Left cardiac atrium (tissue), 4 donors: ENCODE measurements at regions of chr2 and their contacts with region 1.

Region 1: GRCh38 chr2:165293440-165294353 is 54.5 kb downstream of the SCN2A start:
- DNase-seq: no peak
- ATAC-seq: peak; percentile 99

Region 2: GRCh38 chr2:164937864-164938401 is 355.8 kb before region 1 on chr2:
- intact Hi-C with region 1: no loop called
- DNase-seq: no peak
- ATAC-seq: no peak

Region 3: DNA sequence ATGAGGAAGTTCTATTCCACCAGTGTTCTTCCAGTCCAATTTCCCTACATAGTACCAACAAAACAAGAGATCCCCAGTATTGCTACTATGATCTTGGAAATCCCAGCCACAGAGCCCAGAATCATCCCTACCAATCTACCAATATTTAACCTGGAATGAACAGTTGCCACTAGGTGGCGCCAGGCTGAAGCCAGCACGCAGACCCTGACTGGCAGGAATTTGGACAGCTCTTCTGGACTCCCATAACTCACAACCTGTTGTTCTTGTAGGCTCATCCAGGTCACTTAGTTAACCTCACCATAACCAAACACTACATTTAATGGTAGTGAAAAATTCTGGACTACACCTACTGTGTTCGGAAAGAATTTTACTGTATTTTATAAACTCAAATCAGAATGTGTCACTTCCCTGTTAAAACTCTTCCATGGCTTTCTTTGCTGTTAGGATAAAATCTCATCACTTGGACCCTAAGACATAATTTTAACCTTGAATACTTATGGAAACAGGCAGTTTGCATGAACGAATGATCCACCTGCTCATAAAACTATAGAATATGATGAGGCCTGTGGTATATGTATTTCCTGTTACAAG is 278.6 kb before region 1 on chr2:
- intact Hi-C with region 1: loop called in 1 of 2 experiments (anchors 5 kb)
- DNase-seq: peak; percentile 64
- ATAC-seq: peak; percentile 75 to 81

Region 4: DNA sequence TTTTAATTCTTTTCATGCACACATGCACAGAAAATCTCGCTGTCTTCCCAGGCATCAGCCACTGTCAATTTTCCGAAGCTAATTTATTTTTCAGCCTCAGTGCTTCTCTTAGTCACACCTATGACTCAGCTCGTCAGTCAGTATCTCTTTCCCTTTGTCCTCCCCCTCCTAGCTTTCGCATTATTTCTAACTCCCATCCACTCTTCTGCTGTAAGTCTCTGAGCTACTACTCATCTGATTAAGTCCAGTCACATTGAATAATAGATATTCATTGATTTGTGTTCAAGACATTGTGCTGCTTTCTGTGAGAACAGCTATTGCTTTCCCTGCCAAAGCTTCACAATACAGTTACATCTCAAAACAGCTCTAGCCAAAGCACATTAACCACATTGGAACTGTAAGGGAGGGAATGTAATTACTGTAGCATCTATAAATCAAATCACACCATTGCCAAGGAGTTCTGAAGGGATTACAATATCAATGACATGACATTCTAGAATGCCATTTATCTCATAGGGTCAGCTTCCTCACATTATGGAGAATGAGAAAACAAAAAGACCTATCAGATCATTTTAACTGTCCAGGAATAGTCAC is 179.3 kb before region 1 on chr2:
- intact Hi-C with region 1: no loop called
- DNase-seq: no peak
- ATAC-seq: no peak

Region 5: DNA sequence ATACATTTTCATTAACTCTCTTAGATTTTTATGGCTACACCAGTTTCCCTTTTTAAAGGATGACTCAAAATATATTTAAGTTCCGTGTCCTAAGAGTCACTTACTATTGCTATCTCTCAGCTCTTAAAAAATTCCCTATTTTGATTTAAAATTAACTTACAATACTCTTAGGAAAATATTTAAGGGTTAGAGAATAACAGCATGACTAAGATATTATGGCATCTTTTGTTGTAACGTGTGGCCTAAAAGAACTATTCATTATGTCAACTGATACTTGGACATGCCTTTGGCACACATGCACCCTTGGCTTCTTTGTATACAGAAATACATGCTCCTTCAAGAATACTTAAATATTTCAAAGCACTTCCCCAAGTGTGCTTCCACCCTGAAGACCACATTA is 132.2 kb before region 1 on chr2:
- intact Hi-C with region 1: loop called in 1 of 2 experiments (anchors 5 kb)
- DNase-seq: no peak
- ATAC-seq: no peak

Region 6: DNA sequence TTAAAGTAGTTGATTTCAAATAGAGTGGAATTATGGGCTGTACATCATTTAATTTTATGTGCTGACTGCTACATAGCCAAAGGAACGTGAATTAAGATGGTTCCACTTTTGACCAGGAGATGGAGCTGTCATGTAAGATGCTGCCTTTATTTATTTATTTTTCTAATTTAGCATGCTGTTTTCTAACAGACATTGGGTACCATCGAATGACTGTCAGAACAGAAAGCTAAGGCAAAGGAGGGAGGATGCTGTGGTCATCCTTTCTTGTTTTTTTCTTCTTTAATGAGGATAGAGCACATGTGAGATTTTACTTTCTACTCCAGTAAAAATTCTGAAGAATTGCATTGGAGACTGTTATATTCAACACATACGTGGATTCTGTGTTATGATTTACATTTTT is 54.5 kb before region 1 on chr2 and contains the start of gene SCN2A:
- intact Hi-C with region 1: loop called (anchors 2 to 5 kb)
- DNase-seq: no peak
- ATAC-seq: peak in 1 of 2 donors; percentile 36
- total RNA-seq, gene SCN2A: 0.13 to 0.56 TPM